T-cell (primary cell): ENCODE measurements at regions of chr7 and their contacts with region 1.

Region 1: DNA sequence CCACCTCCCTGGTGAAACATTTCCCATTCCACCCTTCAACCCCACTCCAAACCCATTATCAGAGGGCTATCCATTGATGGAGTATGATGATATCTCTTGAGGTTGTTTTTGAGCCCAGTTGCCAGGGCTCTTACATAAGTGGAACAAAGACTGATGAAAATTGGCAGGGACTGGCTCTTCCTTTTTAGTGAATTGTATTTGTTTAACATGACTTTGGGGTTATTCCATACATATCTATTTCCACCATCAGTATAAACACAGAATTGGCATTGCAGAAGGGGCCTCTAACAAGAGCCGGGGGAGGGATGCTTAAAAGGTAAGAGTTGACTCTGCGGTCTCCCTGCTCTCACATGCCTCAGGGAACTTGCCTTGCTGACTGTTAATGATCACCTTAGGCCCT is 28.9 kb downstream of the FZD1 start:
- DNase-seq: no peak
- ATAC-seq: no peak
- H3K4me3 ChIP-seq: no peak overlapping the region
- H3K4me3 Mint-ChIP-seq: no peak overlapping the region
- H3K27ac ChIP-seq: no peak overlapping the region
- H3K27ac Mint-ChIP-seq: no peak overlapping the region
- H3K4me1 ChIP-seq: no peaks in the 10 kb centered on the region
- H3K4me1 Mint-ChIP-seq: no peaks in the 10 kb centered on the region
- H3K27me3 ChIP-seq: no peaks in the 10 kb centered on the region
- H3K27me3 Mint-ChIP-seq: peaks cover 2 to 14% of the 10 kb centered on the region in 2 donors

Region 2: DNA sequence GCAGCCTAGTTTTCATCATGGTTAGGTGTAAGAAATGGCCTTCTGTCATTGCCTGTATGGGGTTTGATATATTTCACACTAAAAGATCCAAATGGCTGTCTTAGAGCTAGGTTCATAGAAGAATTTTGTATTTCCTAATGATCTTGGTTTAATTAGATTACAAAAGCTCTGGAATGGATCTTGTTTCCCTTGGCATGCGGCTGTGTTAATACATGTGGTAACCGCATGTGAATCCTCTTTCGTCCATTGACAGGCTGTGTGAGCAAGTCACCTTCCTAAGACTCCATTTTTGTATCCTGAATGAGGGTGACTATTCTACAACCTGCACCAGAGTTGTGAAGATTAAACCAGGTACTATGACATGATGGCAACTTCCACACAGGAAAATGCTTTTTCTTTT is 41.3 kb before region 1 on chr7:
- CTCF ChIA-PET with region 1: no interaction called
- POLR2A ChIA-PET with region 1: interaction called in 1 of 2 experiments, 13 read pairs
- DNase-seq: no peak
- ATAC-seq: no peak
- H3K4me3 ChIP-seq: no peak overlapping the region
- H3K4me3 Mint-ChIP-seq: no peak overlapping the region
- H3K27ac ChIP-seq: no peak overlapping the region
- H3K27ac Mint-ChIP-seq: no peak overlapping the region
- H3K4me1 ChIP-seq: no peaks in the 10 kb centered on the region
- H3K4me1 Mint-ChIP-seq: no peaks in the 10 kb centered on the region
- H3K27me3 ChIP-seq: no peaks in the 10 kb centered on the region
- H3K27me3 Mint-ChIP-seq: peaks cover 2 to 12% of the 10 kb centered on the region in 2 donors